Natural killer cell (primary cell): ENCODE measurements at regions of chr18 and their contacts with region 1.

Region 1: GRCh38 chr18:31954349-31954748 is 11.4 kb upstream of the TRAPPC8 start:
- DNase-seq: no peak
- ATAC-seq: no peak
- H3K4me3 ChIP-seq: no peak overlapping the region
- H3K4me3 Mint-ChIP-seq: no peak overlapping the region
- H3K27ac ChIP-seq: no peak overlapping the region
- H3K27ac Mint-ChIP-seq: no peak overlapping the region
- H3K4me1 ChIP-seq: peaks cover 2% of the 10 kb centered on the region
- H3K4me1 Mint-ChIP-seq: no peaks in the 10 kb centered on the region
- H3K27me3 ChIP-seq: no peaks in the 10 kb centered on the region
- H3K27me3 Mint-ChIP-seq: no peaks in the 10 kb centered on the region
- CTCF ChIP-seq: no peak

Region 2: DNA sequence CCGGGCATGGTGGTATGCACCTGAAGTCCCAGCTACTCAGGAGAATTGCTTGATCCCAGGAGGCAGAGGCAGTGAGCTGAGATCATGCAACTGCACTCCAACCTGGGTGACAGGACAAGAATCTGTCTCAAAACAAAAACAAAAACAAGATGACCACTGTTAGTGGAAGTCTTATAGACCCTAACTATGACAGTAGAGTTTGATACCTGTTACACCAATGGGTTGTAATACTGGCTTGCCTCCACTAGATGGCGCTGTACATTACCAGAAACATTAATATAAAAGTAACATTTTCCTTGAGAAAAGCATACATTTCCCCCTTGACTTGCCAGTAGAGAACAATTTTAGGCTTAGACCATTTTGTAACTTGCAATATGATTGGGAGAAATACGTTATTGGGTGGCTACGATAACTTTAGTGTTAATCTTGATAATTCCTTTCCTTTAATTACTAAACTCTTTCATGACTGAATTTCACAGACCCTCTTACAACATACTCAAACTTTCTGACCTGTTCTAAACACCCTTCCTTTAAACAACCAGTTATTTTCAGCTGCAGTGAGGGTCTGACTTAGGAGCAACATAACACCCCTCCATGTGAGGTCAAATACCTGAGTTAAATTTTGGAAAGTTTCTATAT is 213.1 kb before region 1 on chr18:
- intact Hi-C with region 1: loop called (anchors 5 kb)
- DNase-seq: peak; percentile 36 to 72
- ATAC-seq: peak; percentile 59 to 85 (median 83)
- H3K4me3 ChIP-seq: no peak overlapping the region
- H3K4me3 Mint-ChIP-seq: no peak overlapping the region
- H3K27ac ChIP-seq: no peak overlapping the region
- H3K27ac Mint-ChIP-seq: no peak overlapping the region
- H3K4me1 ChIP-seq: no peaks in the 10 kb centered on the region
- H3K4me1 Mint-ChIP-seq: no peaks in the 10 kb centered on the region
- H3K27me3 ChIP-seq: no peaks in the 10 kb centered on the region
- H3K27me3 Mint-ChIP-seq: peaks cover 0 to 3% of the 10 kb centered on the region in 2 donors
- CTCF ChIP-seq: peak; percentile 92

Region 3: DNA sequence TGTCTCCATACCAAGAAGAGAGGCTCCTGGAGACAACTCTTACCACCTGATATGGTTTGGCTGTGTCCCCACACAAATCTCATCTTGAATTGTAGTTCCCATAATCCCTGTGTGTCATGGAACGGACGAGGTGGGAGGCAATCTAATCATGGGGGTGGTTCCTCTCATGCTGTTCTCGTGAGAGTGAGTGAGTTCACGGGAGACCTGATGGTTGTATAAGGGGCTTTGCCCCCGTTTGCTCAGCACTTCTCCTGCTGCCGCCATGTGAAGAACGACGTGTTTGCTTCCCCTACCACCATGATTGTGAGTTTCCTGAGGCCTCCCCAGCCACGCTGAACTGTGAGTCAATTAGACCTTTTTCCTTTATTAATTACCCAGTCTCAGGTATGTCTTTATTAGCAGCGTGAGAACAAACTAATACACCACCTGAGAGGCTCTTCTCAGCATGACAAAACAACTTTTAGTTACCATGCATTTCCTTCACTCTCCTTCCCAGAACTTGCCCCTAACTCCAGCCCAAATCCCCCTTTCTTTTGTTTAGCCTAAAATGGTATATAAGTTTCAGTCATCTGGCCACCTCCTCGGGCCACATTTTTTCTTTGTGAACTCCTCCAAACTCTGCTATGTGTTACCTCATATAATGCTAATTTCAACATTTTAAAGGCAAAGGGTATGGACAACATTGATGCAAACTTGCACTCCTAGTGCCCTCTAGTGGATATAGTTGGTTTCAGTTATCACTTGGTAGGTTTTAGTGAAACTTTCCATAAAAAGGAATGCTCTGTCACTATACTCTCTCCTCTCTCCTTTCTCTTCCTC is 135.0 kb before region 1 on chr18:
- intact Hi-C with region 1: loop called (anchors 5 kb)
- DNase-seq: peak in 1 of 2 donors; percentile 53
- ATAC-seq: peak; percentile 56 to 74 (median 59)
- H3K4me3 ChIP-seq: no peak overlapping the region
- H3K4me3 Mint-ChIP-seq: no peak overlapping the region
- H3K27ac ChIP-seq: no peak overlapping the region
- H3K27ac Mint-ChIP-seq: no peak overlapping the region
- H3K4me1 ChIP-seq: no peaks in the 10 kb centered on the region
- H3K4me1 Mint-ChIP-seq: peaks cover 0 to 5% of the 10 kb centered on the region in 2 donors
- H3K27me3 ChIP-seq: no peaks in the 10 kb centered on the region
- H3K27me3 Mint-ChIP-seq: peaks cover 0 to 2% of the 10 kb centered on the region in 2 donors
- CTCF ChIP-seq: peak; percentile 85

Region 4: DNA sequence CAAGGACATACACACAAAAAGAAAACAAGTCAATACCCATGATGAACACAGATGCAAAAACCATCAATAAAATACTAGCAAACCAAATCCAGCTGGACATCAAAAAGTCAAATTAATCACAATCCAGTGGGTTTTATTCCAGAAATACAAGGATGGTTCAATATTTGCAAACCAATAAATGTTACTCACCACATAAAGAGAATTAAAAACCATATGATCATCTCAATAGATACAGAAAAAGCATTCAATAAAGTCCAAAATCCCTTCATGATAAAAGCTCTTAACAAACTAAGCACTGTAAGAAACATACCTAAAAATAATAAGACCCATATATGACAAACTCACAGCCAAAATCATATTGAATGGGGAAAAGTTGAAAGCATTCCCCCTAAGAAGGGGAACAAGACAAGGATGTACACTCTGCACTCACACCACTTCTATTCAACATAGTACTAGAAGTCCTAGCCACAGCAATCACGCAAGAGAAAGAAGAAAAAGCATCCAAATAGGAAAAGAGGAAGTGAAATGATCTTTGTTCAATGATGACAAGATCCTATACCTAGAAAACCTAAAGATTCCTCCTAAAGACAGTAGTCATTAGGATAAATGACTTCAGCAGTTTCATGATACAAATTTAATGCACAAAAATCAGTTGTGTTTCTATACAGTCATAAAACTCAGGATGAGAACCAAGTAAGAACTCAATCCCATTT is 74.0 kb before region 1 on chr18:
- intact Hi-C with region 1: loop called (anchors 10 kb)
- DNase-seq: no peak
- ATAC-seq: no peak
- H3K4me3 ChIP-seq: no peak overlapping the region
- H3K4me3 Mint-ChIP-seq: no peak overlapping the region
- H3K27ac ChIP-seq: no peak overlapping the region
- H3K27ac Mint-ChIP-seq: peak overlapping the region in 1 of 2 donors; percentile 22
- H3K4me1 ChIP-seq: no peaks in the 10 kb centered on the region
- H3K4me1 Mint-ChIP-seq: peaks cover 21 to 32% of the 10 kb centered on the region in 2 donors
- H3K27me3 ChIP-seq: no peaks in the 10 kb centered on the region
- H3K27me3 Mint-ChIP-seq: no peaks in the 10 kb centered on the region
- CTCF ChIP-seq: no peak